ENCODE measurements at regions of chr11 and their contacts with region 1.

Region 1: GRCh38 chr11:134024420-134025081 is 44.3 kb upstream of the JAM3 start:
- DNase-seq: no peak
- H3K4me3 ChIP-seq: no peak overlapping the region
- H3K27ac ChIP-seq: no peak overlapping the region
- H3K4me1 ChIP-seq: peaks cover 20% of the 10 kb centered on the region
- H3K27me3 ChIP-seq: no peaks in the 10 kb centered on the region
- CTCF ChIP-seq: no peak

Region 2: DNA sequence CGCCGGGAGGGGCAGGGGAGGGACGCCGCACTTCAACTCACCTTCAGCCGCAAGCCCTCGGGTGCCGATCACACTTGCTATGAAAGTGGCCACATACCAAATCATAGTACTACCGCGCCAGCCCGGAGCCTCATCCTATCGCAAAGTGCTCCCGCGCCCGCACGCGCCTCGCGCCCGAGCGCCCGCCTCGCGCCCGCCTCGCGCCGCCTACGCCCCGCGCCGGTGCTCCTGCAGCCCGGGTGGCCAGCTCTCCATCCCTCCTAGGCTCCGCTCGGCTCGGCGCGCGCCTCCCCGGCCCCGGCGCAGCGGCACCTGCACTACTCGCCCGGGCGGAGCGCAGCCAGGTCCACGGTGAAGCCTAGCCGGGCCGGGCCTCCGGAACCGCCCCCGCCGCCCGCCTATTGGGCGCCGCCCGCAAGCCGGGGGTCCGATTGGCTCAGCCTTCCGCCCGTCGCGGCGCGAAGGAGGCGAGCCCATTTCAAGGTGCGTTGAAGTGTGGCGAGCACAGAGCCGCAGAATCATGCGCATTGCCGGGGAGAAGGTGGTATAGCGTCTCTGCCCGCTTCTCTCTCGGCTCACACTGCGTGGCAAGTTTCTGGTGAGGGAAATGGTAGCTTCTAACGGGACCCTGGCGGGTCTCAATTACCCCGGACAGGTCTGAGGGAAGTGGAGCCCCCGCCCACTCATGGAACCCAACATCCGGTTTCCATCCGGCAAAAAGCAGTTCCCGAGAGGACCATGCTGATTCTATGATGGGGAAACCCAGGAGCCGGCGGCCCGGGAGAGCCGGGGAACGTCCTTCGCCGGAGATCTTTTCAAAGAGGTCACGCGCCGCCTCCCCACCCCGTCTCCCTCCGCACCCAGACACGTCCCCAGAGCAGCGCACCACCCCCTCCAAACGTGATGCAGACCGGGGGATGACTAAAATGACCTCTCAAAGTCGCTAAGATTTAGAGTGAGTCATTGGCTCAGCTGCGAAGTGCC is 67.6 kb before region 1 on chr11 and contains the start of gene IGSF9B:
- intact Hi-C with region 1: loop called (anchors 10 kb)
- DNase-seq: peak; percentile 88
- H3K4me3 ChIP-seq: peak within 1 kb of the TSS; percentile 81
- H3K27ac ChIP-seq: peak within 1 kb of the TSS; percentile 96
- H3K4me1 ChIP-seq: peaks cover 54% of the 10 kb centered on the region
- H3K27me3 ChIP-seq: peaks cover 36% of the 10 kb centered on the region
- CTCF ChIP-seq: no peak
- total RNA-seq, gene IGSF9B: 44.1 TPM

Region 3: DNA sequence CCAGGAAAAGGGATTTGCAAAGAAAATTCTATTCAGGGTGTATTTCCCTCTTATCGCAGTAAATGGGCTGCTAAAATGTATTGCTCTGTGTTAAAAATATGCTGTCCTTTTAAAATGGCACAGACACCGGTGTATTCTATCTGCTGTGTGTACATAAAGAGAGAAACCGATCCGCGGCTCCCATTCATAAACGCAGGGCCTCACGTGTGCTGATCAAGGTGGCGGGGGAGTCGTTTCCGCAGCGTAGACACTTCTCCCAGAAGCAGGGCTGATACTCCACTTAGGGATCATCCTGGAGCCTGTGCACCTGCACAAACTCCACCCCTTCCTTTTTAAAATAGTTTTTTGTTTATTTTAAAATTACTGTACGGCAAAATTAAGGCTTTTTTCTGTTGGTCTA is 41.7 kb before region 1 on chr11:
- intact Hi-C with region 1: loop called (anchors 2 kb)
- DNase-seq: no peak
- H3K4me3 ChIP-seq: no peak overlapping the region
- H3K27ac ChIP-seq: no peak overlapping the region
- H3K4me1 ChIP-seq: peaks cover 19% of the 10 kb centered on the region
- H3K27me3 ChIP-seq: no peaks in the 10 kb centered on the region
- CTCF ChIP-seq: no peak